HEK293T (cell line): ENCODE measurements at regions of chr10 and their contacts with region 1.

Region 1: GRCh38 chr10:76983624-76984023 is 654.0 kb downstream of the KCNMA1 start:
- DNase-seq: no peak

Region 2: GRCh38 chr10:76309741-76310587 is 673.7 kb before region 1 on chr10:
- CTCF ChIA-PET with region 1: interaction called, 10 read pairs
- POLR2A ChIA-PET with region 1: no interaction called
- DNase-seq: no peak

Region 3: GRCh38 chr10:76946270-76946669 is 37.4 kb before region 1 on chr10:
- CTCF ChIA-PET with region 1: no interaction called
- POLR2A ChIA-PET with region 1: no interaction called
- DNase-seq: no peak

Region 4: GRCh38 chr10:77027576-77027975 is 44.0 kb after region 1 on chr10:
- CTCF ChIA-PET with region 1: no interaction called
- POLR2A ChIA-PET with region 1: no interaction called
- DNase-seq: no peak

Region 5: DNA sequence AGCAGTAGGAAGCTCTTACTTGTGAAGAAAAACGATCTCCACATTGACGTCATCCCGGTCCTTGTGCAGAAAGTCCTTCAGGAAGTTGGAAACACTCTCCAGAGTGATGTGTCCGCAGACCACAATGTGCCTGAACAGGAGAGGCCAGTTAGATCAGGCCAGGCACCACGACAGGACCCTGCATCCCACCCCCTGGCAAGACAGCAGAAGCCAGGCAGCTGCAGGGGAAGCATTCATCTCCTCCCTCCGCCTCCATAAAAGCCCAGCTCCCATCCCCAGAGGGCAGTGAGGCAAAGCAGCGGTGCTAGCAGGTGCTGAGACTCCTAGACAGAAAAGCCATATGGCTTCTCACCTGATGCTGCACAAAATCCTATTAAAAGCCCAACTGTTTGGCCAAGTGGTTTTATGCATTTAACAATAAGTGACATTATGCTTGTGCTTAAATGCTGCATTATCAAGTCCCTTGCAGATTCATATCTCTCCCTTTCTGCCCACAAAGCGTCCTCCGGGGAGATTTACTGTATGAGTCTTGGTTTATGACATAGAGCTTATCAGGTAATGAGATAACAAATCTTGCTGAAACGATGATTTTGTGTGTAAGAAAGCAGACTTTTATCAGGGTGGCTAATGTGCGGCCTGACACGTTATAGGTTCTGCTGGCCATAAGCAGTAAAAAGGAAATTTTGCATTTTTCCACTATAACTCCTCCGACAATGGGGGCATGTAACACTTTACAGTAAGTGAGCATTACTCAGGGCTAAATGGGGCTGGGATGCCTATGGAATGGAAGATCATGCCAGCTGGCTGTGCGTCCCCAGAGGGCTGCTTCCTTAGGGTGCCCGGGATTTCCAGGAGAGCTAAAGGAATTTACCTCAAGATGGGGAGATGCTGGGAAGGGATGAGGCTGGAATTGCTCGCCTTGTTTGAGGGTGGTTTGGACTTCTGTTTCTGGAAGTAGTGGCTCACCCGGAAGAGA is 107.0 kb after region 1 on chr10:
- CTCF ChIA-PET with region 1: no interaction called
- POLR2A ChIA-PET with region 1: no interaction called
- DNase-seq: peak; percentile 27